Right ventricle myocardium inferior (tissue), 1 donor: ENCODE measurements at regions of chr12 and their contacts with region 1.

Region 1: DNA sequence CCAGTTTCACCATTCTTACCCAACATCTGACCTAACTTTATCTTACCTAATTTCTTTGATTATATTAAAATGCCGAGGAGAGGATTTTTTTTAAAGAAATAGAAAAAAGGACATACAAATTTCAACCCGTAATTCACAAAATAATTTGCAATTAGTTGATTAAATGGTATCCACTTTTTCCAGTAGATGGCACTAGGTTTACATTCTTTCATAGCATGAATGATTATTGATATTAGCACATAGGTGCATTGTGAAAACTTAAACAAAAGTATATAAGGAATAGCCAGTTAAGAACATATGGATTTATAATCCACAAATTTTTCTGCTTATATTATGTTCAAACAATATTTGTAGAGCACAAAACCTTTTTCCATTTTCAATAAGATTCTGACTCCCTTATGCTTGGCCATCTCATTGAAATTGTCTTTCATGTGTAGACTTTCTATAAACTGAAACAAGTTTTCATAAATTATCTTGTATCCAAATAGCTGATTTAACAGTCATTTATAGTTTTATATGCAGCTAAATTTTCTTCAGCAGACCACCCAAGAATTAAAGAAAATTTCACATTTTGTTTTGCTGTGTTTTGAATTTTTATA is 35.3 kb downstream of the MSRB3 start:
- DNase-seq: no peak
- ATAC-seq: no peak

Region 2: DNA sequence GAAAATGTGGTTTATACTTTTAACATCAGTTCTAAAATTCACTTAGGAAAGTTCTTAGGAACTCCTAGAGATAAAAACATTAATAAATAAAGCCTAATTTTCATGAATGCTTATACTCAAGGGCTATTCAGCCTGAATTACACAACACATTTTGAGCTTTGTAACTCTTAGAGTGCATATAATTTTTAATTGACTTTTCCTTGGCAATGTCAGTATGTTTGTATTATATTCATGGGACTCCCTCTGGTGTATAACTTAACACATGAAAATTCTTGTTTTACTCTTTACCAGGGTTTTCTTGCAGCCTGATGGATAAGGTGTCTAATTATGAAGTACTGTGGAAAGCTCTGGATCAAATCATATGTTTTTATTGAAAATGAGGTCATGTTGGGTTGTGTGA is 359.9 kb after region 1 on chr12:
- intact Hi-C with region 1: loop called (anchors 10 kb)
- DNase-seq: no peak
- ATAC-seq: no peak